PC-3 (cell line): ENCODE measurements at regions of chr1 and their contacts with region 1.

Region 1: GRCh38 chr1:164716992-164717703 is 158.2 kb downstream of the PBX1 start:
- DNase-seq: peak; percentile 95
- ATAC-seq: peak; percentile 88
- H3K4me3 ChIP-seq: peak overlapping the region; percentile 15; the same call in 1 of the 2 replicates
- H3K27ac ChIP-seq: peak overlapping the region; percentile 90
- H3K4me1 ChIP-seq: peaks cover 42% of the 10 kb centered on the region
- H3K27me3 ChIP-seq: no peaks in the 10 kb centered on the region
- CTCF ChIP-seq: no peak

Region 2: DNA sequence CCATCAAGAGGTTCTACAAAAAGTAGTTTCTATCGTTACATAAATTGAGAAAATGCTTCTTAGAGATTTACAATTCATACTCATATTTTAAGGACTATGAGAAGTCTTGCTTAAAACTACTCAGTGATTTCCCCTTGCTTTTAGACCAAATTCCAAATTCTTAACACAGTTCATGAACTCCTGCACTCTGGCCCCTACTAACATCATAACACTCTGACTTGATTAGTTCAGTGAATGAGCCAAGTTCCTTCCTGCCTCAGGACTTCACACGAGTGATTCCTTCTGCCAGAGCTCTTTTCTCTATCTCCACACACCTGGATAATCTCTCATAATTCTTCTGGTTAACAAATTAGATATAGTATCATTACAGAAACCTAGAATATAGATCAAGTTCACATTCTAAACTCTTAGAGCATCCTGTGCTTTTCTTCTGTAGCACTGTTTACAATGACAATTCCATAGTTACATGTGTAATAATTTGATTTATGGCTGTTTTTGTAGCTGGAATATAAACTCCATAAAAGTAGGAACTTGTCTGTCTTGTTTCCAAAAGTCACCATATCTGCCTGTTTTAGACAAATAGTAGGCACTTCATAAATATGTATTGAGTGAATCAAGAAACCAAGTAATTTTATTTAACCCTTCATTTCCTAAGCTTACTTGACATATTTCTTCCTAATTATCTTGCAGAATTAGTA is 1335.5 kb before region 1 on chr1:
- CTCF ChIA-PET with region 1: no interaction called
- POLR2A ChIA-PET with region 1: no interaction called
- intact Hi-C with region 1: loop called (anchors 5 kb)
- DNase-seq: no peak
- ATAC-seq: no peak
- H3K4me3 ChIP-seq: no peak overlapping the region
- H3K27ac ChIP-seq: no peak overlapping the region
- H3K4me1 ChIP-seq: peaks cover 6% of the 10 kb centered on the region; the same call in 1 of the 2 replicates
- H3K27me3 ChIP-seq: peaks cover 24% of the 10 kb centered on the region
- CTCF ChIP-seq: no peak

Region 3: GRCh38 chr1:164735315-164736052 is 18.3 kb after region 1 on chr1:
- CTCF ChIA-PET with region 1: no interaction called
- POLR2A ChIA-PET with region 1: no interaction called
- intact Hi-C with region 1: loop called (anchors 1 kb)
- DNase-seq: peak; percentile 89
- ATAC-seq: peak; percentile 97
- H3K4me3 ChIP-seq: no peak overlapping the region
- H3K27ac ChIP-seq: peak overlapping the region; percentile 36; the same call in 1 of the 2 replicates
- H3K4me1 ChIP-seq: peaks cover 34% of the 10 kb centered on the region
- H3K27me3 ChIP-seq: no peaks in the 10 kb centered on the region
- CTCF ChIP-seq: no peak